ENCODE measurements at regions of chr10 and their contacts with region 1.

Region 1: DNA sequence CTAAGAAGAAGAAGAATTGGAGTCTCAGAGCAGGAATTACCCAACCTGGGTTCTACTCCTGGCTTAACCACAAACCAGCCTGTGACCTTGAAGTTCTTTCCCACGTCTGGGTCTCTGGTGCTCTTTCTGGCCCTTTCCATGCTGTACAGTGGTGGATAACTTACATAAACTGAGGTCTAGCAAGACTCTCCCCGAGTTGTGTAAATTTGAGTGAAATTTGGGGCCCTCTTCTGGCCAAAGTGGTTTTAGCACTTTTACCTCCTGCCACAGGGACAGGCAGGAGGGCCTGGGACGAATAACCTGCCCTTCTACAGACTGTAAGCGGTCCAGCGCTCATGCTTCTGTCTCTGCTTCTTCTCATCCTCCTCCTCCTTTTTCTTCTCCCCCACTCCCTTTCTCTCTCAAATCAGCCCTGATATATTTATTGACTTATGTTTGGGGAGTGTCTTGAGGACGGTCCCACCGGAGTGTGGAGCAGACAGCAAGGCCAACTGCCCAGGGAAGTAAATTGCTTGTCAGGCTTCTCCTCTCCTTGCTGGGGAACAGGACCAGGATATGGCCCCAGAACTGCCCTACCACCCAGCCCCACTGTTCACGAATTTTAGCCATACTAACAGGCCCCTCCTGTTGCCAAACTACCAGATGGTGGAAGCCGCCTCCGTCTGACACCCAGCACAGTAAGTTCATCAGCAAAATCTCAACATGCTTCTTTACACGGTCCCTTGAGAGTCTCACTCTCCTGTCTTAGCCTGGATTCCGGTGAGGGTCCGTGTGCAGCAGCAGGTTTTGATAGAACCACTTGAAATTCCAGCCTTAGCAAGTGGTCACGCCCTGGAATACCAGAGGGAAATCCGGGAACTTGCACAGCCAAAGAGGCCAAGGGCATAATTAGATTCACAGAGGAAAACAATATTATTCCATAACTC is 4.0 kb upstream of the SH3PXD2A start:
- DNase-seq: peak in 38 of 42 donors; percentile 37 to 91 (median 76)

Region 2: DNA sequence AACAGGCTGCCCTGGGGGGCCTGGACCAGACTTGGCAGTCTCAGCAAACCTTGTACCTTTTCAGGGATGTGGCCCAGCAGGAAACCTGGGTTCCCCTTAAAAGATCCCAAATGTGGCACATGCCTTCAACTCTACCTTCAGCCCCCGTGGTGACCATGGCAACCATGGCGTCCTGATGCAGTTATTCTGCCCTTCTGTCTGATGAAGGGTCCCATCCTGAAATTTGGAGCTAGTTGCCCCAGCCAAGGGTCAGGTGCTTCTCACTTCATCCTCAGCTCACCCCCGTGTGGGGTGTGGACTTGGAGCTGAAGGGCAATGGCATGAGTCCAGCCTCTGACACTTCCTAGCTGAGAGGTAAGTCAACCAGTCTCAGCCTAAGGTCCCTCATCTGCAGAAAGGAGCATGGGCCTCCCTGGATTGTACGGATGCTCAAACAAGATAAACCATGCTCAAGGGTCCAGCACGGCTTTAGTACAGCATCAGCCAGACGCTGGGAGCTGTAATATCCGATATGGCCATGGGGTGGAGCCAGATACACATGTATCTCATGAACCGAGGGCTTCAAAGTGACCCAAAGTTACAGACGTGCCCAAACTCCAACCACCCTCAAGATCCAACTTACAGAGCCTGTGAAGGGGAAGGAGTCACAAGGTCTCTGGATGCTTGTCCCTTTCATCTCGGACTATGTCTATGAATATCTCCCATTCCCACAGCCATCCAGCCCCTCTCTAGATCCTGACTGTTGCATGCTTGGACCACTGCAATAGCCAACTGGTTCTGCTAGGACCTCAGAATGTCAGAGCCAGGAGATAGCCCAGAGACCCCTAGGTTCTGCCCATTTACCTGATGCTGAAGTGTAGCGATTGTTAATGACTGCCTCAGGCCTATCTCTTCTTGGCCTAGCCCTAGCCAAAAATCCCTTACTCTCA is 146.6 kb before region 1 on chr10:
- intact Hi-C with region 1: loop called (anchors 2 kb)
- DNase-seq: peak; percentile 36 to 98 (median 90)

Region 3: DNA sequence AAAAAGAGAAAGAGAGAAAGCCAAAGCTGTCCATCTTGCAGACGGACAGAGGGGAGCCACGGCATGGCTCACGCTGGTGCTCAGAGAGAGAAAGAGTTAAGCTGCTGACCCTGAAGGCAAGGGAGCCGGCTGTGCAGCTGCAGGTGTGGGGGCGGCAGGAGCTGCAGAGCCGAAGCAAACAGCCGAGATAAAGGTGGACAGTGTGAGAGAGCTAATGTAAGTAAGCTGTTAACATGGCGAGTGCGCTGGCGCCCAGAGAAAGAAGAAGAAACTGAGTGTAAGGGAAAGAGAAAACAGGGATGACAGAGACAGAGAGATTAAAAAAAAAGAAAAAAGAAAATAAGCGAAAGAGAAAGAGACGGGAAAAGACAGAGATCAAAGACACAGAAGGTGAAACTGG is 208.1 kb after region 1 on chr10:
- intact Hi-C with region 1: no loop called
- DNase-seq: no peak

Measured in head of caudate nucleus (tissue), 42 donors.